GM10248 (cell line): ENCODE measurements at regions of chr4 and their contacts with region 1.

Region 1: GRCh38 chr4:186067757-186068385 is 1.1 kb upstream of the TLR3 start:
- DNase-seq: peak; percentile 38
- CTCF ChIP-seq: peak; percentile 53

Region 2: DNA sequence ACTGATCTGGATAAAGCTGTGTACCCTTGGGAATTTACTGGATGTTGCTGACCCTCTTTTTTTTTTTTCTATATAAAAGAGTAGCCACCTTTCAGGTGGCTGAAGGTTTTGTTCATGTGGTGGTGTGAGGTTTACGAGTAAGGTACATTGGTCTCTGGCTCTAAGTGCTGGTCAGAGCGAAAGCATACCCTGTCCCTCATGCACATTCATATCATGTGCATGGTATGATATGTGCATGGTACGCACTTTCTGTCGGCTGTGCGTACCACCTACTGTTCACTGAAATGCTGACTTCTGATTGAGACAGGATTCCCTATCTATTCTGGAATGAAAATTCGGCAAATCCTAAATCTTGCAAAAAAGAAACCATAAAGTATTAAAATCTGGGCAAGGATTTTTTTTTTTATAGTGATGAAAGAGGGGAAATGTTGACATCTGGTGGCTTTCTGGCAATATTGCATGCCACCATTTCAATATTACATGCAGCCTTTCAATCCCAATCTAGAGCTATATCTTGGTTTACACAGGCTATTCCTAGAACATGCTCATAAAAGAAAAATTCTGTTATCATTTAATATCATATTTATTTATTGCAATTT is 69.4 kb after region 1 on chr4:
- CTCF ChIA-PET with region 1: interaction called, 44 read pairs
- POLR2A ChIA-PET with region 1: no interaction called
- DNase-seq: no peak
- CTCF ChIP-seq: peak; percentile 68